Naive thymus-derived CD8-positive, alpha-beta T cell (primary cell): ENCODE measurements at regions of chr3 and their contacts with region 1.

Region 1: GRCh38 chr3:51670823-51671733 is at the start of gene TEX264:
- DNase-seq: peak; percentile 90 to 99 (median 94)
- ATAC-seq: peak; percentile 71 to 77
- H3K4me3 Mint-ChIP-seq: peak within 1 kb of the TSS; percentile 85 to 97 (median 90)
- H3K27ac Mint-ChIP-seq: peak within 1 kb of the TSS; percentile 82 to 95 (median 94)
- H3K4me1 Mint-ChIP-seq: peaks cover 39 to 74% (median 65%) of the 10 kb centered on the region in 4 donors
- H3K27me3 Mint-ChIP-seq: no peaks in the 10 kb centered on the region
- polyA plus RNA-seq, gene TEX264: 84.5 to 95.7 (median 85.3) TPM

Region 2: GRCh38 chr3:51682079-51682478 is 11.0 kb after region 1 on chr3:
- POLR2A ChIA-PET with region 1: interaction called, 91 read pairs
- DNase-seq: peak; percentile 33 to 87 (median 76)
- ATAC-seq: peak; percentile 67 to 77
- H3K4me3 Mint-ChIP-seq: peak overlapping the region; percentile 56 to 92 (median 79)
- H3K27ac Mint-ChIP-seq: peak overlapping the region; percentile 15 to 94 (median 74)
- H3K4me1 Mint-ChIP-seq: peaks cover 73 to 99% (median 97%) of the 10 kb centered on the region in 4 donors
- H3K27me3 Mint-ChIP-seq: no peaks in the 10 kb centered on the region

Region 3: DNA sequence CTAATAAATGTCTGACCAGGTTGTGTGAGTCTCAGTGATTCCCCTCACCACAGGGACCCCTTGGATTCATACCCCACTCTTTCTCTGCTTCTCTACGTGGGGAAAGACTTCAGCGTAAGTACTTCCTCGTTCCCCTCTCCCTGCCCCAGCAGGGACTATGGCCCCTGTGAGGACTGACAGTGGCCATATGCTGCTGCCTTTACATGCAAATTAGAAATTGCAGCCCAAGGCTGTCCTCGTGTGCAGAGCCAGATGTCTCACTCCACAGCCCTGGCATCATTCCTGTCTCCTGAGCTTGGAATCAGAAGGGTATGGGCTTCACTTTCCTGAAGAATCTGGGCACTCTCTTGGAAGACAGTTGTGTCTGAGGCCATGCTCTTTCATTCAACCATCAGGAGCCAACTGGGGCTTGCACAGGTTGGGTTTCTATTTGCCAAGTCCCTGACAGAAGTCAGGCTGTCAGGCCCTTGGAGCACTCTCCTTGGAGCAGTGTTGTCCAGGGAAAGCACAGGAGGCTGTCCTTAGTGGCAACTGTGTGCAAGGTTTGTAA is 159.8 kb after region 1 on chr3:
- POLR2A ChIA-PET with region 1: no interaction called
- DNase-seq: no peak
- ATAC-seq: no peak
- H3K4me3 Mint-ChIP-seq: no peak overlapping the region
- H3K27ac Mint-ChIP-seq: no peak overlapping the region
- H3K4me1 Mint-ChIP-seq: no peaks in the 10 kb centered on the region
- H3K27me3 Mint-ChIP-seq: peaks cover 9 to 29% (median 15%) of the 10 kb centered on the region in 5 donors